ENCODE measurements at regions of chr4 and their contacts with region 1.

Region 1: DNA sequence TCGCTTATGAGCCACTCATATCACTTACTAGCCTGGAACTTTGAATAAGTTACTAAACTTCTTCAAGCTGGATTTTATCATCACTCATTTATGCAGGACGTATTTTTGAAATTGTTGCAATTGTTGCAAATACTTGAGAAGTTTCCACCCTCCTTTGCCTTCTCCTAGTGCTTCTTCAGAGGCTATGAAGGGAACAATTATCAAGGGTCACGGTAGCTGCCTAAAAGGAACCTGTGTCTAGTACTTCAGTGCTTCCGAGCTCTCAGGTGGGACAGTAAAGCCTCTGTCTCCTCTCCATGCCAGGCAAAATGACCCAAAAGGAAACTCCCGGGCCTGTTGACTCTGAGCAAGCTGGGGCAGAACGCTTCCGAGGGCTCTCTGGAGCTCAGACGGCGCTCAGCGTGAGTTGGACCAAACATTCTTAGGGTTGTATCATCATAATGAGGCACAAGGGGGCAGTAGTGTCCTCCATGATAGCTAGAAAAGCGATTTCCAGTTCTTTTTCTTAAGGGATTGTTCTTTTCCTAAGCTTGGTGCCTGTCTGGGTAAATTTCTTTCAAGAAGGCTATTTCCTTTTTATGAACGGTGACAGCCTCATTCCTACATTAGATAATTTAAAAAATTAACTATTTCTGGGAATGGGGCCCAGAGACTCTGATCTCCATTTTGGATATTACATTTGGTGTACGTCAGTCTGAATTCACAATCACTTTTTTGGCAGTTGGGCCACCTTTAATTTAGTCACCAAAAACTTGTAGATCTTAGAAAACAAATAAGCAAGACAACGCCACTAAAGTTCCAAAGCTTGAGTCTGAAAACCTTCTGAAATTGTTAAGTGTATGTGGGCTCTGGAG is 73.1 kb downstream of the PACRGL start:
- DNase-seq: peak; percentile 75
- H3K4me3 Mint-ChIP-seq: no peak overlapping the region
- H3K27ac Mint-ChIP-seq: peak overlapping the region; percentile 23
- H3K4me1 Mint-ChIP-seq: no peaks in the 10 kb centered on the region
- H3K27me3 Mint-ChIP-seq: no peaks in the 10 kb centered on the region
- CTCF ChIP-seq: peak; percentile 64

Region 2: DNA sequence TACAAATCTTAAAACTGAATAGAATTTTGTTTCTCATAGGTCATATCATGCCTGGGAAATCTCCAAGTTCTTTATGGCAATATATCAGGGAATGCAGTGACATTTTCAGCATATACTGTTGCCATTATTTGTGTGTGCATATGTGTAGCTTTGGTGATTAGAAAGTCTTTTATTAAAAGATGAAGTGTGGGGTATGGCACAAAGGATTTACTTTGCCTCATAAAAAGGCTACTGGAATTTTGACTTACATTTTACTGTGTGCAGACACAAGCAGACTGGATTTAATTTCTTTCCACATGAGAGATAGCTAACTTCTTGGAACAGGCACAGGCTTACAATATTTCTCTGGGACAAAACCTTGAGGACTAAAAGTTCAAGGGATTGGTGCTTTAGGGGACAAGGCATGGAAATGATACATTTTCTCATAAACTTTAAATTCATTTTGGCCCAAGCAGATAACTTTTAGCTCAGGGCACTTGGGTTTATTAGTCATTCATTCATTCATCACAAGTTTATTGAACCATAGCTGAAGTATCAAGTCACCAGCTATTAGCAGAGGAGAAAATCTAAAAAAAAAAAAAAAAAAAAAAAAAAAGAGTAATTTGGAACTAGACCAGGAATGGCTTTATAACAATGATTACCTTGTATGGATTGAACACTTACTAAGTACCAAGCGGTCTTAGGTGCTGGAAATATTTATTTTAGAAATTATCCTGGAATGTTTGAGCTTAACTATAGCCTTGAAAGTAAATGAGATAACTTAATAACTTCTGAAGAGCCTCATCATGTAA is 330.2 kb before region 1 on chr4:
- CTCF ChIA-PET with region 1: no interaction called
- POLR2A ChIA-PET with region 1: no interaction called
- intact Hi-C with region 1: no loop called
- DNase-seq: no peak
- H3K4me3 Mint-ChIP-seq: no peak overlapping the region
- H3K27ac Mint-ChIP-seq: no peak overlapping the region
- H3K4me1 Mint-ChIP-seq: peaks cover 5% of the 10 kb centered on the region
- H3K27me3 Mint-ChIP-seq: no peaks in the 10 kb centered on the region
- CTCF ChIP-seq: no peak

Region 3: GRCh38 chr4:20589436-20589835 is 183.9 kb before region 1 on chr4:
- CTCF ChIA-PET with region 1: no interaction called
- POLR2A ChIA-PET with region 1: no interaction called
- intact Hi-C with region 1: no loop called
- DNase-seq: no peak
- H3K4me3 Mint-ChIP-seq: no peak overlapping the region
- H3K27ac Mint-ChIP-seq: no peak overlapping the region
- H3K4me1 Mint-ChIP-seq: no peaks in the 10 kb centered on the region
- H3K27me3 Mint-ChIP-seq: no peaks in the 10 kb centered on the region
- CTCF ChIP-seq: no peak

Region 4: DNA sequence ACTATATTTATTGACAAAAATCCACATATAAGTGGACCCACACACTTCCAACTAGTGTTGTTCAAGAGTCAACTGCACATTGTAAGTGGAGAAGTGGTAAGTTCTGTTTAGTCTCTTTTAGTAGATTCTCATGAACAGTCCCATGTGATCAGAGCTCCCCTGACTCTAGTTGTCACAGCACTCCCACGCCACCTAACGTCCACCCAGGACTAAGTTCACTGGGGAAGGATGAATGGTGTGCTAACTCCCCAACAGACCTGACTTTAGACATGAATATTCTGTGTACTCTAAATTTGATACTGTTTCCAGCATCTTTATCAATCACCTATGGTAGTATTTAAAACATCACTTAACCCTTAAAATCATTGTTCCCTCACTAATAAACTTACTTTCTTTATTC is 13.3 kb before region 1 on chr4:
- CTCF ChIA-PET with region 1: interaction called, 21 read pairs
- POLR2A ChIA-PET with region 1: no interaction called
- intact Hi-C with region 1: no loop called
- DNase-seq: peak; percentile 8
- H3K4me3 Mint-ChIP-seq: no peak overlapping the region
- H3K27ac Mint-ChIP-seq: no peak overlapping the region
- H3K4me1 Mint-ChIP-seq: no peaks in the 10 kb centered on the region
- H3K27me3 Mint-ChIP-seq: no peaks in the 10 kb centered on the region
- CTCF ChIP-seq: no peak

Region 5: DNA sequence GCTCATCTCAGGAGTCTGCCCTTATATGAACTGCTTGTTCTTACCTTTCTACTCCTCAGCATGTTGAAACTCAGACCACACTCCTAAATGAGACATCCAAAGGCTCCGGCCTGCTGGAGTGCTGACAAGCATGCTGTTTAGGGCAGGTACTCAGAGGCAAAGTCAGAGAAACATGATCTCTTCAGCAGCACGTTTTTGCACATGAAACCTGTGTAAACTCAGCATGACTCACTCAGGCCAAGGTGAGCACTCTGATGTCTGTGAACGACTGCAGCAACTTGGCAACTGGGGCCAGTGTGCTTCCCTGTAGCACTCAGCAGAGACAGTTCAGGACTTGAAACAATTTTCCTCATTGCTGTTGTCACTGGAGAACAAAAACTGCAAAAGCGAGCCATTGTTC is 36.4 kb after region 1 on chr4:
- CTCF ChIA-PET with region 1: interaction called, 15 read pairs
- POLR2A ChIA-PET with region 1: interaction called, 3 read pairs
- intact Hi-C with region 1: no loop called
- DNase-seq: peak; percentile 90
- H3K4me3 Mint-ChIP-seq: no peak overlapping the region
- H3K27ac Mint-ChIP-seq: no peak overlapping the region
- H3K4me1 Mint-ChIP-seq: peaks cover 8% of the 10 kb centered on the region
- H3K27me3 Mint-ChIP-seq: no peaks in the 10 kb centered on the region
- CTCF ChIP-seq: no peak

Region 6: GRCh38 chr4:21134994-21135393 is 361.6 kb after region 1 on chr4:
- CTCF ChIA-PET with region 1: interaction called, 152 read pairs
- POLR2A ChIA-PET with region 1: interaction called, 4 read pairs
- intact Hi-C with region 1: loop called (anchors 1 kb)
- DNase-seq: peak; percentile 54
- H3K4me3 Mint-ChIP-seq: no peak overlapping the region
- H3K27ac Mint-ChIP-seq: no peak overlapping the region
- H3K4me1 Mint-ChIP-seq: no peaks in the 10 kb centered on the region
- H3K27me3 Mint-ChIP-seq: no peaks in the 10 kb centered on the region
- CTCF ChIP-seq: peak; percentile 52

Region 7: DNA sequence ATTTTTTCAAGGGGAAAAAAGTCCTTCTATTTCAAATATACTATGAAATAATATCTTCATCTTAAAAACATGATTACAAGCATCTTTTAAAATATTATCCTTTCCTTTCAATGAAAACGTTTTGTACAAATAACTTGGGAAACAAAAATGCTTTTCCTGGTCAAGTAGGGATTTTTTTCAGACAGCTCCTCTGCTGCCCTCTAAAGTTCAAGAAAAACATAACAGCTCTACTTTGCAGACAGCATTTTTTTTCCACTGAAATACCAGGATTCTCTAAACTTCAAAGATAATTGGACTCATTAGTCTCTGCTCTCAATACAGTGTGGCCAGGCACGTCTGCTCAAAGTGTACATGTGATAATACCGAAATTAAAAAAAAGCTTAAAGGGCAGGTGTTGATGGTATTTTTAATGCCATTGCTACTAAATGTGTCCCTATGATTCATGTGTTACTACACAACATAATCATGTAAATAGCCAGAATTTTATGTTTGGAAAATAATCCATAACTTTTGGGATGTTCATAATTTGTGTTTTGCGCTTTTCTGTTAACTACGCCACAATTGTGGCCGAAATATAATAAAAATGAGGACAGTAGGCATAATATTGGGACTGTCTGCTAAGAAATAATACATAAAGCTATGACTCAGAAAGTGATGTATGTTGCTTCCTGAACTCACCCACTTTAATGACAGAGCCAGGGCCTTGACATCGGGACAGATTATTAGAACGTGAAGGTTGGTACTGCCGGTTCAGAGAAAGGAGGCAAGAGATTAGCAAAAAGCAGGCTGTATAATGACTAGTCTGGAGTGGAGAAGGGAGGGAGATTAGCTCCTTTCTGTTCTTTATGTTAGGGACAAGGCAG is 696.3 kb after region 1 on chr4:
- CTCF ChIA-PET with region 1: interaction called, 20 read pairs
- POLR2A ChIA-PET with region 1: interaction called, 3 read pairs
- intact Hi-C with region 1: loop called (anchors 1 kb)
- DNase-seq: peak; percentile 47
- H3K4me3 Mint-ChIP-seq: no peak overlapping the region
- H3K27ac Mint-ChIP-seq: peak overlapping the region; percentile 62
- H3K4me1 Mint-ChIP-seq: peaks cover 25% of the 10 kb centered on the region
- H3K27me3 Mint-ChIP-seq: peaks cover 10% of the 10 kb centered on the region
- CTCF ChIP-seq: peak; percentile 63

Measured in MCF 10A (cell line).